Ascending aorta (tissue), 2 donors: ENCODE measurements at regions of chr5 and their contacts with region 1.

Region 1: DNA sequence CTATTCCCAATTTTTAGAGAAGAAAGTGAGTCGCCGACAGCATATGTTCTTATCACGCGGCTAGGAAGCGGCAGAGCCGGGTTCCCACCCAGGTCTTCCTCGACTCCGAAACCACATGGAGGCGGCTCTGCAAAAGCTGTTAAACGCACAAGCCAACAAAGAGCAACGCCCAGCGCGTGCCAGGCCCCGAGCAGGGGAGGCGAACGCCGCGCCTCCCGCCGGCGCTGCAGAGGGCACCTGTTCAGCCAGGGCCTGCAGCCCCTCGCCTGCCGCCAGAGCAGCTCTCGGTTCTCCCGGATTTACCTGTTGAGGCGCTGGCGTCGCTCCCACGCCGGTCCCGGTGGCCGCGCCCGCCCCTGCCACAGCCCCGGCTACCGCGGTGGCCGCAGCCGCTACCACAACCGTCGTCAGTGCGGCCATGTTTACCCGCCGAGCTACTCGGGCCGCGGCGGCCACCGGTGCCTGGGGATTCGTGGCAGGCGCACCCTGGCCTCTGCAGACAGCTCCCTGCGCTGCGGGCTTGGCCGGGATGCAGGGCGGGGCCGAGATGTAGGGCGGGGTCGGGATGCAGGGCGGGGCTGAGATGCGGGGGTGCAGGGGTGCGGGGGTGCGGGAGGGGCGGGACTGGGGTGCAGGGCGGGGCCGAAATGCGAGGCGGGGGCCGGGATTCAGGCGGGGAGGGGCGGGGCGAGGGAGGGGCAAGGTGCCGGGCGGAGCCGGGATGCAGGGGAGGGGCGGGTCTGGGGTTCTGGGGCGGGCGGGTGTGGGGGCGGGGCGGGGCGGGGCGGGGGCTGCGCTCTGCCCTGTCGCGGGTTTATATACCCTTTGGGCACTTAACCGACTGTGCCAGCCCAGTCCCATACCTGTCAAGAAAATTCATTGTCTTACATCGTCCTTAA is at the start of gene CCDC112:
- DNase-seq: peak; percentile 40 to 82
- H3K4me3 ChIP-seq: peak within 1 kb of the TSS; percentile 79 to 100
- H3K27ac ChIP-seq: no peak within 1 kb of the TSS
- H3K4me1 ChIP-seq: peaks cover 0 to 3% of the 10 kb centered on the region in 2 donors
- H3K27me3 ChIP-seq: no peaks in the 10 kb centered on the region
- CTCF ChIP-seq: no peak
- total RNA-seq, gene CCDC112: 10.4 TPM

Region 2: GRCh38 chr5:114346181-114346580 is 950.2 kb before region 1 on chr5:
- intact Hi-C with region 1: no loop called
- DNase-seq: no peak
- H3K4me3 ChIP-seq: no peak overlapping the region
- H3K27ac ChIP-seq: no peak overlapping the region
- H3K4me1 ChIP-seq: no peaks in the 10 kb centered on the region
- H3K27me3 ChIP-seq: no peaks in the 10 kb centered on the region
- CTCF ChIP-seq: no peak

Region 3: GRCh38 chr5:116084871-116085715 is 788.7 kb after region 1 on chr5 and contains the start of gene COMMD10:
- intact Hi-C with region 1: loop called (anchors 10 kb)
- DNase-seq: peak; percentile 21 to 84
- H3K4me3 ChIP-seq: peak within 1 kb of the TSS; percentile 97 to 98
- H3K27ac ChIP-seq: peak within 1 kb of the TSS; percentile 87 to 91
- H3K4me1 ChIP-seq: peaks cover 0 to 13% of the 10 kb centered on the region in 2 donors
- H3K27me3 ChIP-seq: no peaks in the 10 kb centered on the region
- CTCF ChIP-seq: no peak
- total RNA-seq, gene COMMD10: 25.0 TPM